ENCODE measurements at regions of chr12 and their contacts with region 1.

Region 1: DNA sequence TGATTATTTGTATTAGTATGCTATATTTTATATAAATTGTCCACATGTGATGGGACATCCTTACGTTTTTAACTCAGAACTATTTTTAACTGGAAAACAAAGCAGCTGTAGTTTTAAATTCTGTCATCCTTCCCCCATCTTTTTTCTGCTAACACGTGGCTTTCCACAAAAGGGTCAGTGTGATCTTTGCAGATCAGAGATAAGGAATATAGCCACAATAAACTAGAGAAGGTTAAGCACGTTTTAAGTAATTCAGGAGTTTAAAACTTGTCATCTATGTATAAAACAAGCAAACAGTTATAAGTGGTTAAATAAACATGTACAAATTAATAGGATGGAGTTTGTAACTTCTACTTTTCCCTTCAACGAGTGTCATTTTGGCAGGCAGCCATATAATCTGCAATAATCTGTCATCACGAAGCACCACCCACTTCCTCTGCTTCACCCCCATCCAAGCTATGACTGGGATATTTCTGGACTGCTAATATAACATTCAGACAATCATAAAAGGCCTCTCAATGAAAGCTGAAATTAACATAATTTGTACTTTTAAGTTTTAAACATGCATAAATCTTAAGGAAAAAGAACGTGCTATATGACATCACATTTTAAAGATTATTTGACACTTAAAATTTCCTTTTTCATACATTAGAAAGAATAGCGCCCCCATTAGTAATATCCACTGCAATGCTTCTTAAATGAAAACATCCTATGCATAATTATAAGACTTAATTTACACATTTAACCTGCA is 15.3 kb downstream of the TAOK3 start:
- DNase-seq: peak; percentile 62
- ATAC-seq: peak; percentile 80
- H3K4me3 ChIP-seq: peak overlapping the region; percentile 67
- H3K27ac ChIP-seq: peak overlapping the region; percentile 89
- H3K4me1 ChIP-seq: peaks cover 6% of the 10 kb centered on the region; the same call in 1 of the 2 replicates
- H3K27me3 ChIP-seq: no peaks in the 10 kb centered on the region
- CTCF ChIP-seq: peak in 2 of 3 experiments; percentile 34 to 40; a peak in 2 of 6 replicates
- EP300 ChIP-seq: no peak
- POLR2A ChIP-seq: no peak
- RAD21 ChIP-seq: no peak

Region 2: GRCh38 chr12:117732761-117733160 is 624.7 kb before region 1 on chr12:
- CTCF ChIA-PET with region 1: no interaction called
- POLR2A ChIA-PET with region 1: no interaction called
- RAD21 ChIA-PET with region 1: no interaction called
- SMC1A ChIA-PET with region 1: no interaction called
- in situ Hi-C with region 1: no loop called
- intact Hi-C with region 1: no loop called
- DNase-seq: no peak
- ATAC-seq: no peak
- H3K4me3 ChIP-seq: no peak overlapping the region
- H3K27ac ChIP-seq: no peak overlapping the region
- H3K4me1 ChIP-seq: no peaks in the 10 kb centered on the region
- H3K27me3 ChIP-seq: no peaks in the 10 kb centered on the region
- CTCF ChIP-seq: no peak
- EP300 ChIP-seq: no peak
- POLR2A ChIP-seq: no peak
- RAD21 ChIP-seq: no peak

Region 3: DNA sequence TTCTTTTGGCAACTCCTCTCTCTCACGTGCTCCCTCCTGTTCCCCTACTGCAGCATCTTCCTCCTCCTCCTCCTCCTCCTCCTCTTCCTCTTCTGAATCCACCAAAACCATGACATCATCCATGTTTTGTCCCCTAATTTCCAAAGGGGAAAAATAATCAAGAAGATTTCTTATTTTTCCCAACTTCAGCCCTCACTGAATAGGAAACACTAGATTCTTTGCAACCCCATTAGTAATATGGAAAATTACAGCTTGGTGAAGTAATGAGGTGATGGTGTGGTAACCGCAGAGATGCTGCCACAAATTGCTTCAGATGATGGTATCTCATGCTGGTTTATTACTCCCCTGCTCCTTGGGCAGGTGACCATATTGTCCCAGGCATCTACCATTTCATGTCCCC is 289.0 kb before region 1 on chr12:
- CTCF ChIA-PET with region 1: no interaction called
- POLR2A ChIA-PET with region 1: no interaction called
- RAD21 ChIA-PET with region 1: no interaction called
- SMC1A ChIA-PET with region 1: no interaction called
- in situ Hi-C with region 1: no loop called
- intact Hi-C with region 1: no loop called
- DNase-seq: no peak
- ATAC-seq: no peak
- H3K4me3 ChIP-seq: no peak overlapping the region
- H3K27ac ChIP-seq: no peak overlapping the region
- H3K4me1 ChIP-seq: peaks cover 13% of the 10 kb centered on the region
- H3K27me3 ChIP-seq: no peaks in the 10 kb centered on the region
- CTCF ChIP-seq: no peak
- EP300 ChIP-seq: no peak
- POLR2A ChIP-seq: no peak
- RAD21 ChIP-seq: no peak

Region 4: GRCh38 chr12:118175823-118176447 is 181.5 kb before region 1 on chr12:
- CTCF ChIA-PET with region 1: interaction called, 76 read pairs
- POLR2A ChIA-PET with region 1: no interaction called
- RAD21 ChIA-PET with region 1: no interaction called
- SMC1A ChIA-PET with region 1: interaction called, 62 read pairs
- in situ Hi-C with region 1: no loop called
- intact Hi-C with region 1: loop called (anchors 5 kb)
- DNase-seq: peak; percentile 45
- ATAC-seq: peak; percentile 99
- H3K4me3 ChIP-seq: no peak overlapping the region
- H3K27ac ChIP-seq: peak overlapping the region; percentile 22; the same call in 1 of the 2 replicates
- H3K4me1 ChIP-seq: peaks cover 8% of the 10 kb centered on the region
- H3K27me3 ChIP-seq: no peaks in the 10 kb centered on the region
- CTCF ChIP-seq: no peak
- EP300 ChIP-seq: no peak
- POLR2A ChIP-seq: no peak
- RAD21 ChIP-seq: no peak

Region 5: DNA sequence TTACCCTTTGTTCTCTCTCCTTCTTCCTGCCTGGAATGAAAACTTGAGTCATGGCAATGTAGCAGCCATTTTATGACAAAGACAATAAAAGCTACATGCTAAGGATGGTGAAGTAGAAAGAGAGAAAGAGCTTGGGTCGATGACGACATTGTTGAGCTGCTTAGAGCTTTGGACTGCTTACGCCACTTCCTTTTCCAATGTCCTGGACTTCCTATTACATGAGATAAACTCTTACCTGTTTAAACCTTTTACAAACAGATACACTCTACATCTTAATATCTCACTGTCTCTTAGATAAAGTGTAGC is 151.4 kb before region 1 on chr12:
- CTCF ChIA-PET with region 1: interaction called, 14 read pairs
- POLR2A ChIA-PET with region 1: interaction called, 6 read pairs
- RAD21 ChIA-PET with region 1: interaction called, 18 read pairs
- SMC1A ChIA-PET with region 1: interaction called, 37 read pairs
- in situ Hi-C with region 1: no loop called
- intact Hi-C with region 1: no loop called
- DNase-seq: no peak
- ATAC-seq: peak; percentile 14
- H3K4me3 ChIP-seq: no peak overlapping the region
- H3K27ac ChIP-seq: peak overlapping the region; percentile 51
- H3K4me1 ChIP-seq: peaks cover 8% of the 10 kb centered on the region
- H3K27me3 ChIP-seq: no peaks in the 10 kb centered on the region
- CTCF ChIP-seq: no peak
- EP300 ChIP-seq: no peak
- POLR2A ChIP-seq: no peak
- RAD21 ChIP-seq: no peak

Region 6: GRCh38 chr12:118271790-118272417 is 85.5 kb before region 1 on chr12:
- CTCF ChIA-PET with region 1: interaction called, 5 read pairs
- POLR2A ChIA-PET with region 1: no interaction called
- RAD21 ChIA-PET with region 1: interaction called, 9 read pairs
- SMC1A ChIA-PET with region 1: interaction called, 13 read pairs
- in situ Hi-C with region 1: no loop called
- intact Hi-C with region 1: no loop called
- DNase-seq: no peak
- ATAC-seq: no peak
- H3K4me3 ChIP-seq: no peak overlapping the region
- H3K27ac ChIP-seq: no peak overlapping the region
- H3K4me1 ChIP-seq: no peaks in the 10 kb centered on the region
- H3K27me3 ChIP-seq: no peaks in the 10 kb centered on the region
- CTCF ChIP-seq: no peak
- EP300 ChIP-seq: no peak
- POLR2A ChIP-seq: no peak
- RAD21 ChIP-seq: no peak

Region 7: DNA sequence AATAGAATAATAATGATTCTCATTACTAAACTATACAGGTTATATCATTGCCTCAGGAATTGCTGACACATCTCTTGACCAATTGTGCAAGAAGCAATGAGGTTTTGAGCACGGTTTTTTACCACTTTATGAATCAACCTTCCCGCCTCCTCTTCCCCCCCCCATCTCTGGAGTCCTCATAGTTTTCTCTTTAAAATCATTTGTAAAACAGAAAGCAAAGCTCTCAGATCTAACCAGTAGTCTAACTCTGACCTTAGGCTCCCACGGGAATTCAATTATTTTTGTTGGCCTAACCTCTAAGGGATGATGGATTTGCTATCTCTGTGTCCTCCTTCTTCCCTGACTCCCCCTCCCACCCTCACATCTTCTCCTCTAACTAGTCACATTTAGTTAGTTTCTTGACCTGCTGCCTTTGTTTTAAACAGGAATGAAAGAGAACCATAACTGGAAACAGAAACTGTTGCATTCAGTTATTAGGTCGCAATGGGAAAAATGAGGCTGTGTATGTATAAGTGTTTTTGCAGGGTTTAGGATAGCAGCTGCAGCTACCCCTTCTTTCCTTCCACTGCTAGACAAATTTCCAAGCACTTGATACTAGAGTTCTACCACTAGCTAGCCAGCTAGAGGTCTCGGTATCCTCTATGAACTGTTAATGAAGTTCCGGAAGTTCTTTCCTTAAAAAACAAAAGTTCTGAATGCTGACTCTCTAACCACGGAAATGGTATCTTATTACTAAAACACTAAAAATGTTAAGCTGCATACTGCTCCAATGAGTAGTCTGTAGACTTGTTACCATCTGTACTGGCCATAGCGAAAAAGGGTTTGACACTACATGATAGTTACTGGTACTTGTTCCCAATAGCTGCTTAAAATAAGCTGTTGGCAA is 50.1 kb before region 1 on chr12:
- CTCF ChIA-PET with region 1: interaction called, 67 read pairs
- POLR2A ChIA-PET with region 1: interaction called, 20 read pairs
- RAD21 ChIA-PET with region 1: interaction called, 54 read pairs
- SMC1A ChIA-PET with region 1: interaction called, 96 read pairs
- in situ Hi-C with region 1: loop called (anchors 5 kb)
- intact Hi-C with region 1: loop called (anchors 2 kb)
- DNase-seq: peak; percentile 69
- ATAC-seq: peak; percentile 78
- H3K4me3 ChIP-seq: peak overlapping the region; percentile 64
- H3K27ac ChIP-seq: peak overlapping the region; percentile 98
- H3K4me1 ChIP-seq: peaks cover 38% of the 10 kb centered on the region
- H3K27me3 ChIP-seq: no peaks in the 10 kb centered on the region
- CTCF ChIP-seq: no peak
- EP300 ChIP-seq: no peak; a peak in 1 of 4 replicates
- POLR2A ChIP-seq: no peak
- RAD21 ChIP-seq: no peak

Region 8: DNA sequence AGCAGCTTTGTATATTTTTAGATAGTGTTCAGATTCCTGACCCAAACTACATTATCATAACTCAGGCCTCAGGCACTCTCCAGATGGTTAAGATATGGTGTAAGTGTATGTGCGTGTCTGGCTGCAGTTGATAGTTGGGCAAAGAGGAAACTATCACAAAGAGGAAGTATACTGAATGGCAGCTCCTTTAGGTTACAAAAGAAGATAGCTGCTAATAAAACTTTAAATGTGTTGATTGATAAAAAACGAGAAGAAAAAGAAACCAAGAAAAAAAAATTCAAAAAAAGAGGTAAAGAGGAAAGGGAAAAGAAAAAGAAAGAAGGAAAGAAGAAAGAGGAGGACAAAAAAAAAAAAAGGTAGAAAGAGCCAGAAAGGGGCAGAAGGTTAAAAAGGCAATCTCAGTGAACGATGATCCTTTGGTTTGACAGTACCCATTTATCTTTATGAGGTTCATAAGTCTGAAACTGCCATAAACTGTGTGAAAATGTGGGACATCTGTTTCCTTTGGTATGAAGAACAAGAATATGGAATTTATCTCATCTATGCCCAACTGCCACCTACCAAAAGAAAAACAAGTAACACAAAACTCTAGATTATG is 26.9 kb before region 1 on chr12:
- CTCF ChIA-PET with region 1: interaction called, 9 read pairs
- POLR2A ChIA-PET with region 1: interaction called, 21 read pairs
- RAD21 ChIA-PET with region 1: interaction called, 7 read pairs
- SMC1A ChIA-PET with region 1: interaction called, 29 read pairs
- in situ Hi-C with region 1: no loop called
- intact Hi-C with region 1: no loop called
- DNase-seq: no peak
- ATAC-seq: peak; percentile 93
- H3K4me3 ChIP-seq: no peak overlapping the region
- H3K27ac ChIP-seq: peak overlapping the region; percentile 71
- H3K4me1 ChIP-seq: peaks cover 20% of the 10 kb centered on the region
- H3K27me3 ChIP-seq: no peaks in the 10 kb centered on the region
- CTCF ChIP-seq: no peak
- EP300 ChIP-seq: no peak
- POLR2A ChIP-seq: no peak
- RAD21 ChIP-seq: no peak

Region 9: DNA sequence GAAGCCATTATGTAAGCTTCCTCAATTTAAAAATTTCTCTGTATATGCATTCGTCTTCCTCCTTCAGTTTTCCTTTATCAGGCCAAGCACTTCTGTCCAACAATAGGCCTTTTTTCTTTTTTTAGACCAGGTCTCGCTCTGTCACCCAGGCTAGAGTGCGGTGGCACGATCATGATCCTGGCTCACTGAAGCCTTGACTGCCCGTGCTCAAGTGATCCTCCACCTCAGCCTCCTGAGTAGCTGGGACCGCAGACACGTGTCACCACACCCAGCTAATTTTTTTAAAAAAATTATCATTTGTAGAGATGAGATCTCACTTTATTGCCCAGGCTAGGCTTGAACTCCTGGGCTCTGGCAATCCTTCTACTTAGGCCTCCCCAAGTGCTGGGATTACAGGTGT is 10.5 kb before region 1 on chr12:
- CTCF ChIA-PET with region 1: interaction called, 98 read pairs
- POLR2A ChIA-PET with region 1: interaction called, 68 read pairs
- RAD21 ChIA-PET with region 1: interaction called, 98 read pairs
- SMC1A ChIA-PET with region 1: interaction called, 125 read pairs
- in situ Hi-C with region 1: no loop called
- intact Hi-C with region 1: no loop called
- DNase-seq: no peak
- ATAC-seq: peak; percentile 89
- H3K4me3 ChIP-seq: no peak overlapping the region; the same call in 1 of the 2 replicates
- H3K27ac ChIP-seq: peak overlapping the region; percentile 21
- H3K4me1 ChIP-seq: peaks cover 21% of the 10 kb centered on the region; the same call in 1 of the 2 replicates
- H3K27me3 ChIP-seq: no peaks in the 10 kb centered on the region
- CTCF ChIP-seq: no peak
- EP300 ChIP-seq: no peak
- POLR2A ChIP-seq: no peak
- RAD21 ChIP-seq: no peak

Measured in GM12878 (cell line).